ENCODE measurements at regions of chr2 and their contacts with region 1.

Region 1: DNA sequence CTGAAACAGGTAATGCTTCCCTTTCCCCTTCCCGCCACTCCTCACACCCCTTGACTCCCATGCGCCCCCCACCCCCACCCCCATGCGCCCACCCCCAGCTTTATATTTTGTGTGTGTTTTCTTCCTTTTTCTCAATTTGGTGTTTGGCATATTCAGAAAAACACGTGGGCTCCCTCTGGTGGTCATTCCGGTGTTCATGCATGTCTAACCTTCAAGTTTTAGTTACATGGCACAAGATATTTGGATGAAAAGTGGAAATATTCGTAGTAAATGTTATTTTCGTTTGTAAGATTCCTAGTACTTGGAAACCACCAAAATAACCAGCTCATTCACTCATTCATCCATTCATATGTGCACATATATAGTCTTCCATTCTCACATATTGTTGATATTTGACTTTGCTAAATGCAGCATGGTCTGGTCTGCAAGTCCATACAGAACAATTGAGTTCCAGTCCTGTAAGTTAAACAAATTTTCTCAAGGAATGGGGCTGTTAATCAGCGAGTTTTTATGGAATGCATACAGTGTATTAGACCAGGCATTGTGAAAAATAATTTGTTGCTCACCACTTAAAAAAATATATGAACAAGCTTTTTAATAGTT is 143.6 kb upstream of the MAP3K20 start:
- DNase-seq: peak in 1 of 2 experiments; percentile 61
- H3K4me3 ChIP-seq: no peak overlapping the region
- H3K27ac ChIP-seq: no peak overlapping the region
- H3K4me1 ChIP-seq: peaks cover 2 to 7% (median 6%) of the 10 kb centered on the region in 4 experiments; a peak in 4 of 7 replicates
- H3K27me3 ChIP-seq: no peaks in the 10 kb centered on the region
- CTCF ChIP-seq: peak in 2 of 3 experiments; percentile 69 to 74; a peak in 3 of 4 replicates
- EP300 ChIP-seq: no peak
- POLR2A ChIP-seq: no peak
- RAD21 ChIP-seq: peak; percentile 74 to 80

Region 2: DNA sequence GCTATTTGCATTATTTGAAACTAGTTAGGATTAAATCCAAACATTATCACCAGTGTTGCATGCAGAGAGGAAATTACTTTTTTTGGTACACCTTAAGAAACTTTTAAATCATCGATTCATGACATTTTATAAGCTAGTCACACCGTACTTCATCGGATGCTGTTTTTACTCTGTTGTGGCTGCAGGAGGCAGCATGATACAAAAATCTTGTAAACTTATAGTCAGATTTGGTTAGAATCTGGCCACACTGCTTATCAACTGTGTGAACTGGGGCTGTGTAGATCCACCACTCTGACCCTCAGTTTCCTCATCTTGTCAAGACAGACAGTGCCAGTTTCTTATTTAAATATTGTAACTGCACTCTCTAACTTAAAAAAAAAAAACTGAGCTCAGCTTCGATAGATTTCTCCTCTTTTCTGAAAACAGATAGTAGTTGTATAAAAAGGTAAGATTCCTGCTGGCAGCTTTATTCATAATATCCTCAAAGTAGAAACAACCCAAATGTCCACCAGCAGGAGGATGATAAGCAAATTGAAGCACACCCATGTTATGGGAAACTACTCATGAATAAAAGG is 118.6 kb before region 1 on chr2:
- CTCF ChIA-PET with region 1: interaction called, 22 read pairs
- POLR2A ChIA-PET with region 1: no interaction called
- DNase-seq: no peak
- H3K4me3 ChIP-seq: no peak overlapping the region
- H3K27ac ChIP-seq: no peak overlapping the region
- H3K4me1 ChIP-seq: no peaks in the 10 kb centered on the region
- H3K27me3 ChIP-seq: no peaks in the 10 kb centered on the region
- CTCF ChIP-seq: peak in 2 of 3 experiments; percentile 30 to 48; a peak in 2 of 4 replicates
- EP300 ChIP-seq: no peak
- POLR2A ChIP-seq: no peak
- RAD21 ChIP-seq: peak; percentile 44 to 58

Region 3: DNA sequence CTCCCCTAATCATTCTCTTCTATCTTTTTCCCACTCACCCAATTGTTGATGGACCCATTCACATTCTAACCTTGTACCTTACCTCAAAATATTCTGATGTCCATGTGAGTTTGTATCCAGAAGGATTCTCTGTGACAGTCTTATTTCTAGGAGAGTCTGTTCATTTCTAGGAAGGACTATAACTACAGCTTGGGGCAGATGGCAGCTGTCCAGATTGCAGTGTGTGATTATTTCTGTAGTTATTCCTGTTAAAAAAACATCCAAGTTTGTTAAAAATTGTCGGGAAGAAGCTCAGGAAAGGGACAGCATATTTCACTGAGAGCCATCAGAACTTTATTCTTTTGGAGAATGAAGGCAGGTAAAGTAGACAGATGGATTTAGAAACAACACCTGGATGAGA is 53.8 kb before region 1 on chr2:
- CTCF ChIA-PET with region 1: interaction called, 10 read pairs
- POLR2A ChIA-PET with region 1: no interaction called
- DNase-seq: no peak
- H3K4me3 ChIP-seq: no peak overlapping the region
- H3K27ac ChIP-seq: no peak overlapping the region
- H3K4me1 ChIP-seq: no peaks in the 10 kb centered on the region
- H3K27me3 ChIP-seq: no peaks in the 10 kb centered on the region; a peak in 1 of 7 replicates
- CTCF ChIP-seq: no peak
- EP300 ChIP-seq: no peak
- POLR2A ChIP-seq: no peak
- RAD21 ChIP-seq: no peak

Region 4: GRCh38 chr2:172921532-172922236 is 10.3 kb before region 1 on chr2:
- CTCF ChIA-PET with region 1: interaction called, 51 read pairs
- POLR2A ChIA-PET with region 1: interaction called, 4 read pairs
- DNase-seq: no peak
- H3K4me3 ChIP-seq: no peak overlapping the region
- H3K27ac ChIP-seq: no peak overlapping the region
- H3K4me1 ChIP-seq: peaks cover 0 to 4% (median 0%) of the 10 kb centered on the region in 4 experiments; a peak in 2 of 7 replicates
- H3K27me3 ChIP-seq: no peaks in the 10 kb centered on the region
- CTCF ChIP-seq: no peak
- EP300 ChIP-seq: no peak
- POLR2A ChIP-seq: no peak
- RAD21 ChIP-seq: no peak

Region 5: DNA sequence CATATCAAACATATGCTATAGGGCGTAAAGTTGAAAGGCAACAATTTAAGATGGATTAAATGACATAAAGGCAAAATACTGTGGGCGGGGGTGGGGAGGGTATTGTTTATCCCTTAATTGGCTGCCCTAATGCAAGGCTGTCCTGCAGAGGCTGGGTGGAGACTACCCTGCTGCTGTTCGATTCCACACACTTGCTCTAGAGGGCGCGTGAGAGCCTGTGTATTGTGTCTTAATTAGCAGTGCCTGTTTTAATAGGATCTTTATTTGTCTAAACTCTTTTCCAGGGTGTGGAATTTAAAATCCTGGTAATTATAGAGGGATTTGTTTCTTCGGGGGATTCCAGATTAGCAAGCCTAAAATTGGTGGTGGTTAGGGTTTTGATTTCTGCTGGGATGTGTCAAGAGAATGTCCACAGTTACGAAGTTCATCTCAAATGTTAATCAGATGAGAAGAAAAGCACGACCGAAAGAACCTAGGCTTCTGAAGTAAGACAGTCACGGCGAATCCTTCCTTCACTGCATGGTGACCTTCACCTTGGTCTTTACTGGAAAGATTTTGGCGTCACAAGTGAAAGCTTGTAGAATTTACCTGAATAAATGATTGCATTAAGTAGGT is 40.1 kb after region 1 on chr2:
- CTCF ChIA-PET with region 1: interaction called, 10 read pairs
- POLR2A ChIA-PET with region 1: no interaction called
- DNase-seq: peak in 1 of 2 experiments; percentile 79
- H3K4me3 ChIP-seq: no peak overlapping the region
- H3K27ac ChIP-seq: no peak overlapping the region
- H3K4me1 ChIP-seq: no peaks in the 10 kb centered on the region; a peak in 1 of 7 replicates
- H3K27me3 ChIP-seq: no peaks in the 10 kb centered on the region; a peak in 1 of 7 replicates
- CTCF ChIP-seq: peak; percentile 73 to 84 (median 79)
- EP300 ChIP-seq: no peak
- POLR2A ChIP-seq: no peak
- RAD21 ChIP-seq: peak; percentile 60 to 66

Region 6: GRCh38 chr2:172991031-172991430 is 59.0 kb after region 1 on chr2:
- CTCF ChIA-PET with region 1: no interaction called
- POLR2A ChIA-PET with region 1: no interaction called
- DNase-seq: no peak
- H3K4me3 ChIP-seq: no peak overlapping the region
- H3K27ac ChIP-seq: no peak overlapping the region
- H3K4me1 ChIP-seq: peaks cover 0 to 3% (median 0%) of the 10 kb centered on the region in 4 experiments; a peak in 2 of 7 replicates
- H3K27me3 ChIP-seq: no peaks in the 10 kb centered on the region
- CTCF ChIP-seq: no peak
- EP300 ChIP-seq: no peak
- POLR2A ChIP-seq: no peak
- RAD21 ChIP-seq: no peak

Region 7: DNA sequence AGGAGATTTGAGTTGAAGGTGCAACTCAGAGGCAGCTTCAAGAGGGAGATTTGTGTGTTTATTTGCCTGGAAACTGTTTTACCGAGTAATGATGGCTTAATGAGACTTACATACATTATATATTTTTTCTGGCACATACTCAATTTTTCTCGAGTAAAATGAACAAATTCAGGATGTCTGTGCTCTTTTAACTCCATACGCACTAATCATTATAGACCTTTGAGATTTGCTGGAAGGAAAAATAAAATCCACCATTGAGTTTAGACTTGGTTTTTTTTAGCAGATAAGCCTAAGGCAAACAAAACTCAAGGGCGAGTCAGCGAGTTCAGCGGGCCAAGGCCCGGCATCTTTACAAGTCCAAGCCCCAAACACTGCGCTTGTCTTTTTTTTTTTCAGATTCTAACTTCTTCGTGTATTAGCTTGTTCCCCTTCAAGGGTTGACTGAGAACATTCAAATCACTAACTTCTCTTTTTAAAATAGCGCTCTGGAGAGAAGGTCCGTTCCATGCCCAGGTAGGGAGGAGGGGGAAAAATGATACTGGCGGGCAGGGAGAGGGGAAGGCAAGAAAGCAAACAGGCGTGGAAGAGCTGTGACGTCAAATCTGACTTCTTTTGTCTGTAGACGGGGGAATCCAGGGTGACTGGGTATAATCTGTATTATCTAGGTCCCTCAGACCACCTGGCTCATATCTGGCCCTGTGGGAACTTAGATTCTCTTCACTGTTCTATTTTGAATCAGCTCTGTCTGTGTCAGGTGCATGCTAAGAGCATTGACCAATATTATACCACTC is 70.9 kb after region 1 on chr2:
- CTCF ChIA-PET with region 1: no interaction called
- POLR2A ChIA-PET with region 1: no interaction called
- DNase-seq: no peak
- H3K4me3 ChIP-seq: no peak overlapping the region
- H3K27ac ChIP-seq: no peak overlapping the region
- H3K4me1 ChIP-seq: peaks cover 0 to 4% (median 0%) of the 10 kb centered on the region in 4 experiments; a peak in 2 of 7 replicates
- H3K27me3 ChIP-seq: no peaks in the 10 kb centered on the region
- CTCF ChIP-seq: no peak
- EP300 ChIP-seq: no peak
- POLR2A ChIP-seq: no peak
- RAD21 ChIP-seq: no peak

Region 8: DNA sequence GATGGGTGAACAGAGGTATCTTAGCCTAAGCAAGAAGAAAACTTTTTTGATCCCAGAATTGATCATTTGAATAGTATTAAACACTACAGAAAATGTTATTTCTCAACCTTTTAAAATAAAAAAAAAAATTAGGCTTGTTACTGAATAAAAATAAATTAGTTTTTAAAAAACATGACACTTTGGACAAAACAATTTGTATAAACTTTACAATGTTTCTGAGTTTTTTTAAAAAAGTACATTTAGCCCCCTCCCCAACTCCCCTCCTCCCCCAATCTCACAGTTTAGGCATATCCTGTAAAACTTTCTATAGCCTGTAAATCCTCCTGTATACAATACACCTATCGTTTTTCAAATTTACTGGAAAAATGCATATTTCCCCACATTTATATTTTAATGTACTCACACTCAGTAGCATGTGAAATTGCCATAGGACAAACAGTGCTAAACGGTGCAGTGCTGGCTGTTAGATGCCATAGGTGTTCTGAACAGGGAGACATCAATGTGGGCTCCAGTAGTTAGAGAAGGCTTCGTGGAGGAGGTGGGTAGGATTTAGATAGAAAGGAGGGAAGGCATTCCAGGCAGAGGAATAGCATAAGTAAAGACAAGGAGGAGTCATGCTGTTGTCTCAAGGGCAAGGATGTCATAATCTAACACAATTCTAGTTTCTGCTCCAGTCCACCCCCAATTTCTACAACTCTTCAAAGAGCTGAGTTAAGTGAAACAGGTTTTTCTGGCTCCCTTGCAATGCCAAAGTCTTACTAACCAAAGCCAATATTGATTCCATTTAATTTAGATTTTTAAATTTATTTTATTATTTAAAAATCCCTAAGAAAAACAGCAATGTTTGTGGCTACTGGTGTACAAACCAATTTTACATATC is 982.3 kb after region 1 on chr2:
- CTCF ChIA-PET with region 1: no interaction called
- POLR2A ChIA-PET with region 1: no interaction called
- DNase-seq: no peak
- H3K4me3 ChIP-seq: no peak overlapping the region
- H3K27ac ChIP-seq: no peak overlapping the region
- H3K4me1 ChIP-seq: 0 out of 7 replicates have a peak, but pooled peaks cover 0 to 3% (median 1%) of the 10 kb centered on the region in 4 experiments
- H3K27me3 ChIP-seq: no peaks in the 10 kb centered on the region
- CTCF ChIP-seq: no peak
- EP300 ChIP-seq: no peak
- POLR2A ChIP-seq: no peak
- RAD21 ChIP-seq: no peak